ENCODE measurements at regions of chr6 and their contacts with region 1.

Region 1: GRCh38 chr6:132300323-132300949 is 100.8 kb downstream of the MOXD1 start:
- DNase-seq: no peak
- ATAC-seq: no peak
- H3K4me3 ChIP-seq: no peak overlapping the region
- H3K27ac ChIP-seq: no peak overlapping the region
- H3K4me1 ChIP-seq: no peaks in the 10 kb centered on the region
- H3K27me3 ChIP-seq: no peaks in the 10 kb centered on the region
- CTCF ChIP-seq: peak in 2 of 5 experiments; percentile 21 to 23
- POLR2A ChIP-seq: no peak

Region 2: DNA sequence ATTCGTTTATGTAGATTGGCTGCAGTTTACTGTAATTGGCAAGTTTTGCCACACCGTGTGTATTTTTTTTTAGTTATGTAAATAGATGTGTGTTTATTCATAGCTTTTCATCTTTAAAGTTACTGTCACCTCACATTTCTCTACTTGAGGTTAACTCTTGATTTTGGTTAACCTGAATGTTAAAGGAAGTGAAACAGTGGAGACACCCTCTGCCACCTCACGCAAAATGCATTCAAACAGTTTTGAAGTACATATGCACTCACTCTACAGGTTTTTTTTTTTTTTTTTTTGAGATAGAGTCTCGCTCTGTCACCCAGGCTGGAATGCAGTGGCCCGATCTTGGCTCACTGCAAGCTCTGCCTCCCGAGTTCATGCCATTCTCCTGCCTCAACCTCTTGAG is 617.0 kb before region 1 on chr6:
- in situ Hi-C with region 1: no loop called
- intact Hi-C with region 1: no loop called
- DNase-seq: no peak
- ATAC-seq: no peak
- H3K4me3 ChIP-seq: no peak overlapping the region
- H3K27ac ChIP-seq: no peak overlapping the region
- H3K4me1 ChIP-seq: no peaks in the 10 kb centered on the region
- H3K27me3 ChIP-seq: no peaks in the 10 kb centered on the region
- CTCF ChIP-seq: no peak
- POLR2A ChIP-seq: no peak

Region 3: GRCh38 chr6:132412656-132413498 is 112.4 kb after region 1 on chr6:
- in situ Hi-C with region 1: no loop called
- intact Hi-C with region 1: loop called (anchors 5 kb)
- DNase-seq: no peak
- ATAC-seq: no peak
- H3K4me3 ChIP-seq: no peak overlapping the region
- H3K27ac ChIP-seq: no peak overlapping the region
- H3K4me1 ChIP-seq: no peaks in the 10 kb centered on the region
- H3K27me3 ChIP-seq: peaks cover 0 to 2% (median 0%) of the 10 kb centered on the region in 3 donors
- CTCF ChIP-seq: no peak
- POLR2A ChIP-seq: no peak